Breast epithelium (tissue), 4 donors: ENCODE measurements at regions of chr10 and their contacts with region 1.

Region 1: DNA sequence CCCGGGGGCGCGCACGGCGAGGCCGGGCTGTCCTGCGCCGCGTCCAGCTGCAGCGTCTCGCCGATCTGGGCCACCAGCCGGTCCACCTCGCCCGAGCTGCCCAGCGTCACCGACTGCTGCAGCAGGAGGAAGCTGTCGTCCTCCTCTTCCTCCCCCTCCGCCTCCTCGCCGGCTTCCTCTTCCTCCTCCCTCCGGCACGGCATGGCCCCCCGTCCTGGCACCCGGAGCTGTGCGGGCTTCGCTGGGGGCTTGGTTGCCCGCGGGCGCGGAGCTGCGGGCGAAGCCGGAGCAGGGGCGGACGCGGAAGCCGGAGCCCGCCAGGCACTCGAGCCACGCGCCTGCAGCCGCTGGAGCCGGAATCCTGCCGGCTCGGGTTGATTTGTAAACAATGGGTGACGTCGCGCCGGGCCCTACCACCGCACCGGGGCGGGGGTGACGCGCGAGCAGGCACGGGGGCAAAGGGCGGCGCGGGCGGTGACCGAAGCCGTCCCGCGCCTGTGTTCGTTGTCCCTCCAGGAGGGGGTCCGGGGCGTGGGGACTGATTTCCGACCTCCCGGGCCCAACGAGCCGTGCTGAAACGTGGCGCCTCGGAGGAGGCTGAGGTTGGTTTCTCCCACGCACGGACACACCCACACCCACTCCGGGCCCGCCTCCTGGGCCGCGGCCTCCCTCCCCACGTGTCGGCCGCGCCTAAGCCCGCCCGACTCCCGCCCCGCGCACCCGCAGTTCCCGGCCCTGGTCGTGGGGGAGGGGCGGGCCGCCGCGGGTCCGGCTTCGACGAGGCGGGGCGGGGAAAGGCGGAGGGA is at the start of gene FRAT2:
- DNase-seq: peak; percentile 89 to 91
- H3K4me3 ChIP-seq: peak within 1 kb of the TSS; percentile 76 to 98 (median 89)
- H3K27ac ChIP-seq: peak within 1 kb of the TSS; percentile 96 to 97
- H3K4me1 ChIP-seq: peaks cover 4 to 9% of the 10 kb centered on the region in 2 donors
- H3K27me3 ChIP-seq: no peaks in the 10 kb centered on the region
- CTCF ChIP-seq: peak in 1 of 3 donors; percentile 33
- POLR2A ChIP-seq: peak; percentile 46
- total RNA-seq, gene FRAT2: 12.2 to 24.1 (median 15.4) TPM

Region 2: GRCh38 chr10:97498076-97498840 is 163.7 kb after region 1 on chr10 and contains the start of gene MMS19:
- intact Hi-C with region 1: loop called (anchors 5 kb)
- DNase-seq: peak; percentile 99 to 100
- H3K4me3 ChIP-seq: peak within 1 kb of the TSS; percentile 80 to 98 (median 84)
- H3K27ac ChIP-seq: peak within 1 kb of the TSS; percentile 89 to 93
- H3K4me1 ChIP-seq: peaks cover 0 to 5% of the 10 kb centered on the region in 2 donors
- H3K27me3 ChIP-seq: no peaks in the 10 kb centered on the region
- CTCF ChIP-seq: no peak
- POLR2A ChIP-seq: no peak
- total RNA-seq, gene MMS19: 73.0 to 109 (median 78.7) TPM